Mammary epithelial cell (primary cell): ENCODE measurements at regions of chr11 and their contacts with region 1.

Region 1: DNA sequence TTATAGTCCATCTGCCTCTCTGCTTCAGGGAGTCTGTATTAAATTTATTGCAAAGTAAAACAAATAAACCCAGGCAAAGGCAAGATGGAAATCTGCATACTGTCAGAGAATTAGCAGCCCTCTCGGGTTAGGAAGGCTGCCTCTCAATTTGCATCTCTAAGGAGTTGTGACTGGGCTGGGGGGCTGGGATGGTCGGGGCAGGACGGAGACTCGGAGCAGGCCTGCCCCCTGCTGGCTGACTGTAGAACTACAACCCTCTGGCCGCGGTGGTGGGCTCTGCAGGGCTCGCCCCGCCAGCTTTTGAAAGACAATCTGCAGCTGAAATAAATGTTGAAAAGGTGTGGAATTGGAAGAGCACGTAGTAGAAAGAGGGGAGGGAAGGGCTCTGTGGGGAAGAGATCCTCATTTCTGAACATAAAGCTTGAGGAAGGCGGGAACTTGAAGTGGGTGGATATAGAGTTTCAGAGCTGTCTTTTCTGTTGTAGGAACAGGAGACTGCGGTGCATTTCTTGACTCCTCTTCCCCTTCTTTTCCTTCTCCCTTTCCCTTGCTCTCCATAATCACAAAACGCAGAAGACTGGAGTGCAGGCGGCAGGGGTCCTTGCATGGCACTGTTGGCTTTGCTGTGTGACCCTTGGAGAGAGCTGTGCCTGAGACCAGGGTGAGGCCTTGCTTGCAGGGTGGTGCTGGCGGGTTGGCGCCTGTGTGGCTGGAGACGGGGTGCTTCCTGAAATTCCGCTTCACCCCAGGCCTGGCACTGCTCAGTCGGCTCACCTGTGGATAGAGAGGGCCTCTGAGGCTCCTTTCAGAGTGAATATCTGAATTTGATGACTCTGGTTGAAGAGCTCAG is 22.6 kb upstream of the PKNOX2 start:
- DNase-seq: no peak
- H3K4me3 ChIP-seq: no peak overlapping the region
- H3K27ac ChIP-seq: no peak overlapping the region
- H3K4me1 ChIP-seq: no peaks in the 10 kb centered on the region
- H3K27me3 ChIP-seq: no peaks in the 10 kb centered on the region
- CTCF ChIP-seq: peak; percentile 81 to 97

Region 2: GRCh38 chr11:124961972-124962609 is 179.8 kb before region 1 on chr11:
- CTCF ChIA-PET with region 1: no interaction called
- dilution Hi-C with region 1: no loop called
- in situ Hi-C with region 1: loop called in 1 of 2 experiments (anchors 10 kb)
- intact Hi-C with region 1: loop called (anchors 1 kb)
- DNase-seq: peak; percentile 67
- H3K4me3 ChIP-seq: no peak overlapping the region
- H3K27ac ChIP-seq: no peak overlapping the region
- H3K4me1 ChIP-seq: no peaks in the 10 kb centered on the region
- H3K27me3 ChIP-seq: no peaks in the 10 kb centered on the region
- CTCF ChIP-seq: peak; percentile 73 to 76

Region 3: GRCh38 chr11:124976994-124977393 is 164.9 kb before region 1 on chr11:
- CTCF ChIA-PET with region 1: no interaction called
- dilution Hi-C with region 1: no loop called
- in situ Hi-C with region 1: loop called in 1 of 2 experiments (anchors 5 kb)
- intact Hi-C with region 1: no loop called
- DNase-seq: no peak
- H3K4me3 ChIP-seq: no peak overlapping the region
- H3K27ac ChIP-seq: no peak overlapping the region
- H3K4me1 ChIP-seq: no peaks in the 10 kb centered on the region
- H3K27me3 ChIP-seq: no peaks in the 10 kb centered on the region
- CTCF ChIP-seq: no peak

Region 4: DNA sequence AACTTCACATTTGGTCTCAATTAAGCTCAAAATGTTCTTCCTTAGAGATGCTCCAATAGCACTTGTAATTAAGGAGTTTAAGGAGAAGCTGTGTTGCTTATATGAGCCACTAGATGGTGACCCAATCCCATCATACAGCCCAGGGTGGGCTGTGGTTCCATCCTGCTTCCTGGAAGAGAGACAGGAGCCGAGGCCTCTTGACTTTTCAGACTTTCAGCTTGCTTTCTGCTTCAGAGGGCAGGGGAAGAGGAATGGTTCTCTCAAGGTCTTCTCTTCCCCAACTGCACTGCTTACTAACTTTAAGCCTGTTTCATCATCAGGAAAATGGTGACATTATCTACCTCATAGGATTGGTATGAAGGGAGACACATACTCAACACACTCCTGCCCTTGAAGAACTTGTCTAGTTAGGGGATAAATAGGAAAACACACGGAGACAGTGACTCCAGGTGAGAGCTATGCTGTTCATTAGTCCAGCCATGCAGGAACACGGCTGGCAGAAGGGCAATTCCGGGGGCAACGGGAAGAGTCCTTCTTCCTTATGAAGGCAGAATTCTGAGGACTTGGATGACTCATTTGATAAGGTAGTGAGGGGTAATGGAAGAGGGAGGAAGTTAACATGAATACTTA is 50.5 kb before region 1 on chr11:
- CTCF ChIA-PET with region 1: interaction called, 3 read pairs
- dilution Hi-C with region 1: no loop called
- in situ Hi-C with region 1: no loop called
- intact Hi-C with region 1: loop called (anchors 1 kb)
- DNase-seq: peak; percentile 57
- H3K4me3 ChIP-seq: no peak overlapping the region
- H3K27ac ChIP-seq: no peak overlapping the region
- H3K4me1 ChIP-seq: peaks cover 14% of the 10 kb centered on the region
- H3K27me3 ChIP-seq: no peaks in the 10 kb centered on the region
- CTCF ChIP-seq: peak; percentile 46 to 53

Region 5: DNA sequence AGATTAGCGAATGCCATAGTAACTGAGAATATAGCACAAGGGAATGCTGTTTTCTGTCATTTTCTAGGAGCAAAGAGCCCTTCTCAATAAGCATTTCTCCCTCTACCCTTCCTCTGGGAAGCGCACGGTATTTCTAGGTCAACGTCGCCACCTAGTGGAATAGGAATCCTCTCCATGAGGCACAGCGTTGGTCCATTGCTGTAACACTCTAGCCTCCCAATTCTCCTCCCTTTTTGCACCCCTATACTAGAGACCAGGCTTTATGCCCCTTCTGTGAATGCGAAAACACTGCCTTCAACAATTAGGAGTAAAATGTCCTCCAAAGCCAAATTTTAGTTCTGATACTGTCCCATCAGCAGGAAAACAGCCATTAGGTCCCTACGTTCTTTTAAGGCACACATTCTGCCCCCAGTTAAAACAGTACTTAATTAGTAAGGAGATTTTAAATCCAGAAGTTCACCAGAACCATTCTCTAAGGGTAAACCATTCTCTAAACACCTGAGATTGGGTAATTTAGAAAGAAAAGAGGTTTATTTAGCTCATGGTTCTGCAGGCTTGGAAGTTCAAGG is 732.7 kb after region 1 on chr11:
- CTCF ChIA-PET with region 1: no interaction called
- dilution Hi-C with region 1: no loop called
- in situ Hi-C with region 1: no loop called
- intact Hi-C with region 1: loop called (anchors 10 kb)
- DNase-seq: peak; percentile 44
- H3K4me3 ChIP-seq: no peak overlapping the region
- H3K27ac ChIP-seq: no peak overlapping the region
- H3K4me1 ChIP-seq: no peaks in the 10 kb centered on the region
- H3K27me3 ChIP-seq: no peaks in the 10 kb centered on the region
- CTCF ChIP-seq: peak; percentile 83 to 85